HepG2 (cell line): ENCODE measurements at regions of chr6 and their contacts with region 1.

Region 1: GRCh38 chr6:133916650-133917151 is 27.8 kb downstream of the TCF21 start:
- DNase-seq: peak; percentile 75
- ATAC-seq: peak; percentile 96
- H3K4me3 ChIP-seq: no peak overlapping the region
- H3K27ac ChIP-seq: no peak overlapping the region
- H3K4me1 ChIP-seq: no peaks in the 10 kb centered on the region
- H3K27me3 ChIP-seq: no peaks in the 10 kb centered on the region
- CTCF ChIP-seq: peak; percentile 93
- EP300 ChIP-seq: no peak
- POLR2A ChIP-seq: no peak
- RAD21 ChIP-seq: peak; percentile 74; the same call in 1 of the 2 replicates

Region 2: GRCh38 chr6:133428299-133428698 is 488.4 kb before region 1 on chr6:
- CTCF ChIA-PET with region 1: no interaction called
- POLR2A ChIA-PET with region 1: no interaction called
- in situ Hi-C with region 1: no loop called
- intact Hi-C with region 1: no loop called
- DNase-seq: no peak
- ATAC-seq: no peak
- H3K4me3 ChIP-seq: no peak overlapping the region
- H3K27ac ChIP-seq: no peak overlapping the region
- H3K4me1 ChIP-seq: no peaks in the 10 kb centered on the region
- H3K27me3 ChIP-seq: no peaks in the 10 kb centered on the region
- CTCF ChIP-seq: no peak
- EP300 ChIP-seq: no peak
- POLR2A ChIP-seq: no peak
- RAD21 ChIP-seq: no peak

Region 3: GRCh38 chr6:133837801-133838349 is 78.8 kb before region 1 on chr6:
- CTCF ChIA-PET with region 1: interaction called, 32 read pairs
- POLR2A ChIA-PET with region 1: no interaction called
- in situ Hi-C with region 1: loop called (anchors 5 kb)
- intact Hi-C with region 1: loop called (anchors 1 kb)
- DNase-seq: peak; percentile 56
- ATAC-seq: peak; percentile 99
- H3K4me3 ChIP-seq: peak overlapping the region; percentile 57 to 74 (median 60)
- H3K27ac ChIP-seq: no peak overlapping the region
- H3K4me1 ChIP-seq: no peaks in the 10 kb centered on the region
- H3K27me3 ChIP-seq: no peaks in the 10 kb centered on the region; a peak in 1 of 5 replicates
- CTCF ChIP-seq: peak; percentile 91
- EP300 ChIP-seq: no peak
- POLR2A ChIP-seq: no peak
- RAD21 ChIP-seq: peak; percentile 79